A673 (cell line): ENCODE measurements at regions of chr2 and their contacts with region 1.

Region 1: GRCh38 chr2:190804182-190804795 is 76.3 kb upstream of the GLS start:
- DNase-seq: peak; percentile 43
- H3K4me3 ChIP-seq: no peak overlapping the region
- H3K27ac ChIP-seq: no peak overlapping the region
- H3K4me1 ChIP-seq: peaks cover 5% of the 10 kb centered on the region
- H3K27me3 ChIP-seq: no peaks in the 10 kb centered on the region
- CTCF ChIP-seq: peak; percentile 72

Region 2: GRCh38 chr2:190379249-190379964 is 424.9 kb before region 1 on chr2:
- CTCF ChIA-PET with region 1: no interaction called
- POLR2A ChIA-PET with region 1: no interaction called
- intact Hi-C with region 1: loop called (anchors 10 kb)
- DNase-seq: no peak
- H3K4me3 ChIP-seq: no peak overlapping the region
- H3K27ac ChIP-seq: no peak overlapping the region
- H3K4me1 ChIP-seq: no peaks in the 10 kb centered on the region
- H3K27me3 ChIP-seq: no peaks in the 10 kb centered on the region
- CTCF ChIP-seq: no peak

Region 3: GRCh38 chr2:190528521-190529001 is 275.7 kb before region 1 on chr2:
- CTCF ChIA-PET with region 1: no interaction called
- POLR2A ChIA-PET with region 1: no interaction called
- intact Hi-C with region 1: no loop called
- DNase-seq: peak; percentile 18
- H3K4me3 ChIP-seq: no peak overlapping the region
- H3K27ac ChIP-seq: no peak overlapping the region
- H3K4me1 ChIP-seq: peaks cover 27% of the 10 kb centered on the region
- H3K27me3 ChIP-seq: no peaks in the 10 kb centered on the region
- CTCF ChIP-seq: no peak

Region 4: GRCh38 chr2:190707726-190708125 is 96.6 kb before region 1 on chr2:
- CTCF ChIA-PET with region 1: no interaction called
- POLR2A ChIA-PET with region 1: no interaction called
- intact Hi-C with region 1: no loop called
- DNase-seq: no peak
- H3K4me3 ChIP-seq: no peak overlapping the region
- H3K27ac ChIP-seq: no peak overlapping the region
- H3K4me1 ChIP-seq: no peaks in the 10 kb centered on the region
- H3K27me3 ChIP-seq: no peaks in the 10 kb centered on the region
- CTCF ChIP-seq: no peak